MCF 10A (cell line): ENCODE measurements at regions of chr4 and their contacts with region 1.

Region 1: DNA sequence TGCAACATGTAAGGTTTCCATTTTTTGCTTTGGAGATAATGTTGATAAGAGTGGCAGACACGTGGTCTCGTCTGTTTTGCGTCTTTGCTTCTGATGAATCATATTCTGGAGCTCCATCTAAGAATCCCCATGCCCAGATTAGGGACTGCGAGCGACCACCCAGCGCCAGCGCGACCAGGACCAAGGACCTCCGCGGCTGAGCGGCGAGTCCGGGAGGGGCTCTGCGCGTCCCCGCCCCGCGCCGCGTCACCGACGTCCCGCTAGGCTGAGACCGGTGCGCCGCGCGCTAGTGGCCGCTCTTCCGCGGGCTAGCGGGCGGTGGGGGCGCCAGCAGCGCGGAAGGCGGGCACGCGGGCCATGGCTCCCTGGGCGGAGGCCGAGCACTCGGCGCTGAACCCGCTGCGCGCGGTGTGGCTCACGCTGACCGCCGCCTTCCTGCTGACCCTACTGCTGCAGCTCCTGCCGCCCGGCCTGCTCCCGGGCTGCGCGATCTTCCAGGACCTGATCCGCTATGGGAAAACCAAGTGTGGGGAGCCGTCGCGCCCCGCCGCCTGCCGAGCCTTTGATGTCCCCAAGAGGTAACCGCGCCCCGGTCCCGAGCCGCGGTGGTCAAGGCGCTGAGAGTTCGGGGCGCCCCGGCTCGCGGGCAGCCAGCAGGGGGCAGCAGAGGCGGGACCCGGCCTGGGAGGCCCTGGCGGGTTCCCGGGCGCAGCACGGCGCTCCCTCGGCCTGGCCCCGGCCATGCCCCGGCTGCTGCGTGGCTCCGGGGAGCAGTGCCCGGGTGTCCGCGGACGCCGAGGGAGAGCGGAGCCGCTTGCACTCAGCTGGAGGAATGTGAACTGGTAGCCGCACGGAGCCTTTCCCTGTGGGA is at the start of gene SRD5A3:
- DNase-seq: peak; percentile 83
- H3K4me3 Mint-ChIP-seq: peak within 1 kb of the TSS; percentile 77
- H3K27ac Mint-ChIP-seq: peak within 1 kb of the TSS; percentile 71
- H3K4me1 Mint-ChIP-seq: peaks cover 23% of the 10 kb centered on the region
- H3K27me3 Mint-ChIP-seq: no peaks in the 10 kb centered on the region
- CTCF ChIP-seq: peak; percentile 92
- total RNA-seq, gene SRD5A3: 18.9 and 26.1 TPM in 2 replicates

Region 2: GRCh38 chr4:55269995-55270394 is 76.2 kb before region 1 on chr4:
- CTCF ChIA-PET with region 1: no interaction called
- POLR2A ChIA-PET with region 1: no interaction called
- intact Hi-C with region 1: no loop called
- DNase-seq: no peak
- H3K4me3 Mint-ChIP-seq: no peak overlapping the region
- H3K27ac Mint-ChIP-seq: no peak overlapping the region
- H3K4me1 Mint-ChIP-seq: peaks cover 5% of the 10 kb centered on the region
- H3K27me3 Mint-ChIP-seq: peaks cover 14% of the 10 kb centered on the region
- CTCF ChIP-seq: no peak

Region 3: DNA sequence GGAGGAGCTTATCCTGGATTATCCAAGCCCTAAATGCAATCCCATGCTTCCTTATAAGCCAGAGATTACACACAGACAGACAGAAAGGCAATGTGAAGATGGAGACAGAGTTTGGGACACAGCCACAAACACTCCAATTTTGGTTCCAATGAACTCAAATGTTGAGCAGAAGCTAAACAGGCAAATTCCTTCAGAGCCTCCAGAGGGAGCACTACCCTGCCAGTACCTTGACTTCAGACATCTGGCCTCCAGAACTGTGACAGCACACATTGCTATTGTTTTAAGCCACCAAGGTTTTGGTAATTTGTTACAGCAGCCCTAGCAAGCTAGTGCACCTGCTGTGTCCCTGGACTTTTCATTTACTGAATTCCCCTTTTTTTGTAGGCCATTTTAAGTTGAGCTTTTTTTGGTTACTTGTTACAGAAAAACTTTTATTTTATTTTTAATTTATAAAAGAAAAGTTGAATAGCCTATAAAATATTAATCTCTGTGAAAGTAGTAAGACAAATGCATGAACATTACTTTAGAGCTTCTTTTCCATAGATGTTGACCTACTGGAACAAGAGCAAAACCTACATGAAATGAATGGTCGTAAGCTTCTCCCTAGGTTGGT is 33.6 kb before region 1 on chr4:
- CTCF ChIA-PET with region 1: interaction called, 12 read pairs
- POLR2A ChIA-PET with region 1: no interaction called
- intact Hi-C with region 1: no loop called
- DNase-seq: peak; percentile 65
- H3K4me3 Mint-ChIP-seq: no peak overlapping the region
- H3K27ac Mint-ChIP-seq: no peak overlapping the region
- H3K4me1 Mint-ChIP-seq: no peaks in the 10 kb centered on the region
- H3K27me3 Mint-ChIP-seq: no peaks in the 10 kb centered on the region
- CTCF ChIP-seq: peak; percentile 52

Region 4: DNA sequence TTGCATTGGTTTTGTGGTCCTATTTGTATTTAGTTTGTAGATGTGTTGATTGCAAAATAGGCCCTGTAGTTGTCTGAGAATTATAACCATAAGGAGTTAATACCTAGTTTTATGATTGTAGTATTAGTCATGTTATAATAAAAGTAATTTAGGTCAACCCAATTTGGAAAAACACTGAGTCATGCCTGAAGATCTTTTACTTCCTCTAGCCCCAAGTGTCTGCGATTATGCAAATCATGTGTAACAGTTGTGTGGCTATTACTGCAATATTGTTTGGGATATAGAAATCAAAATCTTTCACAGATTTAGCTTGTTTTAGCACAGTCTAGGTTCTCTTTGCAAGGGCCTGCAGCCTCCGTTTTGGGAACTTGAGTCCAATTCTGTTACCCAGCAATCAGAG is 12.5 kb after region 1 on chr4:
- CTCF ChIA-PET with region 1: interaction called, 29 read pairs
- POLR2A ChIA-PET with region 1: interaction called, 22 read pairs
- intact Hi-C with region 1: no loop called
- DNase-seq: peak; percentile 94
- H3K4me3 Mint-ChIP-seq: no peak overlapping the region
- H3K27ac Mint-ChIP-seq: peak overlapping the region; percentile 76
- H3K4me1 Mint-ChIP-seq: peaks cover 35% of the 10 kb centered on the region
- H3K27me3 Mint-ChIP-seq: no peaks in the 10 kb centered on the region
- CTCF ChIP-seq: no peak

Region 5: GRCh38 chr4:55395529-55396307 is 49.5 kb after region 1 on chr4 and contains the start of gene TMEM165:
- CTCF ChIA-PET with region 1: interaction called, 37 read pairs
- POLR2A ChIA-PET with region 1: interaction called, 387 read pairs
- intact Hi-C with region 1: loop called (anchors 1 kb)
- DNase-seq: peak; percentile 93
- H3K4me3 Mint-ChIP-seq: peak within 1 kb of the TSS; percentile 93
- H3K27ac Mint-ChIP-seq: peak within 1 kb of the TSS; percentile 98
- H3K4me1 Mint-ChIP-seq: peaks cover 22% of the 10 kb centered on the region
- H3K27me3 Mint-ChIP-seq: no peaks in the 10 kb centered on the region
- CTCF ChIP-seq: no peak
- total RNA-seq, gene TMEM165: 110 and 119 TPM in 2 replicates

Region 6: DNA sequence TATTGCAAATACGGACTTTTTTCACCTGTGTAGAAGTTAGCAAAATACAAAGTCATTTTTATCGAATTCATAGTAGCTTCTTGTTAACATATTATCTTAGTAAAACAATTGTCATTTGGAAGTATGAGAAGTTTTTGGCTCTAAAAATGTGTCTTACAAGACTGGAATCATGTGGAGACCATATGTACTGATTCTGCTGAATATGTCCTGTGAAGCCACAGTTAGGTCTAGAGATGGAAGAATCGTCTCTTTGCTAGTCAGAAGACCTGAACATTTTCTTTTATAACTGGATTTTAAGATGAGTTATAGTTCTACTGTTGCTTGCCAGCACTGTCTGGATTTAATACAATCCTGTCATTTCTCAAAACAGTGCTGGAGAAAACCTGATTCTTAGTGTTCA is 78.6 kb after region 1 on chr4:
- CTCF ChIA-PET with region 1: interaction called, 5 read pairs
- POLR2A ChIA-PET with region 1: interaction called, 6 read pairs
- intact Hi-C with region 1: loop called (anchors 5 kb)
- DNase-seq: no peak
- H3K4me3 Mint-ChIP-seq: no peak overlapping the region
- H3K27ac Mint-ChIP-seq: peak overlapping the region; percentile 5
- H3K4me1 Mint-ChIP-seq: peaks cover 17% of the 10 kb centered on the region
- H3K27me3 Mint-ChIP-seq: no peaks in the 10 kb centered on the region
- CTCF ChIP-seq: no peak

Region 7: DNA sequence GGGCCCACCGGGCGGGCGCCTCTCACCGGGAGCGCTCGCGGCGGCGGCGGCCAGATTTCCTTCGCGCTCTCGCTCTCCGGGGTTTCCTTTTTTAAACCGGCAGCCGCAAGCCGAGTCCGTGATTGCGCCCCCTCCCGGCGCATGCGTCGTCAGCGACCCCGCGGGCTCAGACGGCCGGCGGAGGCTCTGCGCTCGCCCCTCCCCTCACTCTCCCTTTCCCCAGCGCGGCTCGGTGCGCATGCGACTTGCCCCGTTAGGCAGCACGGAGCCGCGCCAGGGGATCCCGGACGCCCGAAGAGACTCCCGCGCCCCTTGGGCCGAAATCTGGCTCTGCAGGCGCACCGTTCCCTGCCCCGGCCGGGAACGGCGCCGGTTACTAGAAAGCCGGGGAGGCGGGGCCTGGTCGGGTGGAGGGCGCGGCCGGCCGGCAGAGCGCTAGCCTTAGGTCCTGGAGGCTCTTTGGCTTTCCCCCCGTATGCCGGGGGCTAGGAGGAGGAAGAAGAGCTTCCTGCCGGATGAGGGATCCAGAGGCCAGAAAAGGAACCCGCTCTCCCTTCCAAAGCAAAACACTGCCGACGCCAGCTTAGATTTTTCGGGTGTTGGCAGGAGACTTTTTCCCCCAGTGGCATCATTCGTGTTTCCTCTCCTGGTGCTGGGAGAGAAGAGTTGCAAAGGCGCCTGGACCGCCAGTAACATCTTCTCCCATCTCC is 200.7 kb after region 1 on chr4 and contains the start of gene CLOCK:
- CTCF ChIA-PET with region 1: interaction called, 4 read pairs
- POLR2A ChIA-PET with region 1: interaction called, 4 read pairs
- intact Hi-C with region 1: loop called (anchors 2 kb)
- DNase-seq: peak; percentile 85
- H3K4me3 Mint-ChIP-seq: peak within 1 kb of the TSS; percentile 87
- H3K27ac Mint-ChIP-seq: peak within 1 kb of the TSS; percentile 49
- H3K4me1 Mint-ChIP-seq: peaks cover 53% of the 10 kb centered on the region
- H3K27me3 Mint-ChIP-seq: no peaks in the 10 kb centered on the region
- CTCF ChIP-seq: peak; percentile 29
- total RNA-seq, gene CLOCK: 37.6 and 44.0 TPM in 2 replicates

Region 8: DNA sequence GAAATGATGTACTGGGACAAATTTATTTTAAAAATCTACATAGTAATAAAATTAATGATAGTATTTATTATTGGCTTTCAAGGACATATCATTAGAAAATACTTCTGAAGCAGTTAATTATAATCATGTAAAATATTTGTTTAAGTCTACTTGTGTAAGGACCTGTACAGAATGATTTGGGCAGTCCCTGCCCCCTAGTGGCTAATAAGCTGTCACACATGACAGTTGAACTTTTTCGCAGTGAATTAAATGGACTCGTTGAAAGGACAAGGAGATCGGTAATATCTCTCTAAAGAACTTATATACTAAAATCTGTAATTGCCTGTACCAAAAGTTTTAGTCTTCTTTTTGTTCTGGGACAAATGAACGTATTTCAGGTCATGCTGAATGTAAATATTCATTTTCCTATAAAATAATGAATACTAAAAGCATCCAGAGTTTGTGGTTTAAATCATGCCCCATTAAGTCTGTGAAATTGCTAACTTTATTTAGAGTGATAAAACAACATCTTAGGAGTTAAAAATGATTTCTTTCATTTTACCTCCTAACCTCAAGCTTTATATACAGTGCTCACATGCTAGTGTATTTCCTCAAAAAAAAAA is 520.9 kb after region 1 on chr4:
- CTCF ChIA-PET with region 1: interaction called, 4 read pairs
- POLR2A ChIA-PET with region 1: no interaction called
- intact Hi-C with region 1: loop called (anchors 2 kb)
- DNase-seq: peak; percentile 76
- H3K4me3 Mint-ChIP-seq: no peak overlapping the region
- H3K27ac Mint-ChIP-seq: no peak overlapping the region
- H3K4me1 Mint-ChIP-seq: peaks cover 22% of the 10 kb centered on the region
- H3K27me3 Mint-ChIP-seq: no peaks in the 10 kb centered on the region
- CTCF ChIP-seq: peak; percentile 73